ENCODE measurements at regions of chr21 and their contacts with region 1.

Region 1: GRCh38 chr21:17679002-17679600 is 66.4 kb upstream of the BTG3 start:
- DNase-seq: no peak
- ATAC-seq: peak in 7 of 8 donors; percentile 71 to 87 (median 78)
- H3K4me3 ChIP-seq: no peak overlapping the region
- H3K27ac ChIP-seq: no peak overlapping the region
- H3K4me1 ChIP-seq: no peaks in the 10 kb centered on the region
- H3K27me3 ChIP-seq: no peaks in the 10 kb centered on the region
- CTCF ChIP-seq: peak; percentile 65 to 91 (median 85)

Region 2: DNA sequence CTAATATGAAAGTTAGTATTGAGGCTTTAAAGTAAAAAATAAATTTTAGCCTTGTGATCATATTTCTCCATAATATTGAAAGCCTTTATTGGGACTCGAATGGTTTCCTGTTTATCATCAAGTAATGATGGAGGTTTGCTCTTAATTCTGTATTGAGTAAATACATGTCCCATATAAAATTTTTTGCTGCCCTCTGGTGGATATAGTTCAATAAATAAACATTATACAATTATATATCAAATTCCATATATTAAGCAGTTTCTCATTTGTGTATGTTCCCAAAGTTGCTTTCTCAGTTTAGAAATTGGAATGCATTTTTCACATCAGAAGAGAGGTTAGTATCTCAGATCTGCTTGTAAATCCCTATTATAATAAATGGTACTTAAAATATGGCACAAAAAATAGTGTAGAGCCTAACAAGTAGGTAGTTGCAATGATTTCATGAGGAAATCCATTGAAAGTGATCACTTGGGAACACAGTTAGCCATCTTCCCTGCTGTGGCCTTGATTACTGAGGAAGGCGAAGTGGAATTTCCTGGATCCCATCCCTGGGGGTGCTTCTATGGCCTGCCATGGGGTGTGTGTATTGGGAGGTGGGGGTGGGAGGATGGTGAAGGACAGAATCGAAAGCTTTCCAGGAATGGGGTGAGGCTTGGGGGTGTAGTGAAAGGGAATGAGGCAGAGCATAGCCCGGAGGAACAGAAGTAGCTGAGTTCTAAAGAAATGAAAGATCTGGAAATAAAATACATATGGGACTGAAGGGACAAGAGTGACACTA is 224.1 kb after region 1 on chr21:
- intact Hi-C with region 1: loop called (anchors 1 to 5 kb)
- DNase-seq: no peak
- ATAC-seq: no peak
- H3K4me3 ChIP-seq: no peak overlapping the region
- H3K27ac ChIP-seq: no peak overlapping the region
- H3K4me1 ChIP-seq: peaks cover 0 to 24% (median 6%) of the 10 kb centered on the region in 9 donors
- H3K27me3 ChIP-seq: no peaks in the 10 kb centered on the region
- CTCF ChIP-seq: peak in 6 of 9 donors; percentile 42 to 57 (median 46)

Region 3: GRCh38 chr21:17915976-17916375 is 236.9 kb after region 1 on chr21:
- intact Hi-C with region 1: loop called in 2 of 10 experiments (anchors 5 kb)
- DNase-seq: no peak
- ATAC-seq: no peak
- H3K4me3 ChIP-seq: no peak overlapping the region
- H3K27ac ChIP-seq: no peak overlapping the region
- H3K4me1 ChIP-seq: no peaks in the 10 kb centered on the region
- H3K27me3 ChIP-seq: peaks cover 0 to 2% (median 0%) of the 10 kb centered on the region in 7 donors
- CTCF ChIP-seq: no peak

Region 4: GRCh38 chr21:17925000-17925610 is 246.0 kb after region 1 on chr21:
- intact Hi-C with region 1: loop called in 7 of 10 experiments (anchors 2 to 5 kb)
- DNase-seq: peak in 1 of 2 donors; percentile 63
- ATAC-seq: peak; percentile 63 to 93 (median 84)
- H3K4me3 ChIP-seq: no peak overlapping the region
- H3K27ac ChIP-seq: no peak overlapping the region
- H3K4me1 ChIP-seq: peaks cover 0 to 11% (median 0%) of the 10 kb centered on the region in 9 donors
- H3K27me3 ChIP-seq: no peaks in the 10 kb centered on the region
- CTCF ChIP-seq: peak; percentile 69 to 92 (median 87)